Gastrocnemius medialis (tissue), 4 donors: ENCODE measurements at regions of chr14 and their contacts with region 1.

Region 1: DNA sequence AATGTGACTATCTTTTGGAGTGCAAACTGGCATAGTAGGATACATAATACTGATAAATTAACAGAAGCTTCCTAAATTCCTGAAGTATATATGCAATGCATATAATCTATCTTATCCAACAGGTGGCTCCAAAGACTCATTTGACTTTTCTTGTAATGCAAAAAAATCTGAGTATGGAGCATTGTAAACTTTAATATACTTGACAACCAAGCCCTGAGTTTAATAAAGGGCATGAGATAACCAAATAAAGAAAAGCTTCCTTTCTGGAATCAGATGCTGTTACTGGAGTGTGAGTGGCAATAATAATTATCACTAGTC is 1003.5 kb downstream of the FSCB start:
- DNase-seq: no peak
- ATAC-seq: no peak
- H3K4me3 ChIP-seq: no peak overlapping the region
- H3K27ac ChIP-seq: no peak overlapping the region
- H3K4me1 ChIP-seq: no peaks in the 10 kb centered on the region
- H3K27me3 ChIP-seq: no peaks in the 10 kb centered on the region
- CTCF ChIP-seq: no peak
- POLR2A ChIP-seq: no peak

Region 2: GRCh38 chr14:43019806-43020205 is 483.7 kb before region 1 on chr14:
- in situ Hi-C with region 1: no loop called
- intact Hi-C with region 1: loop called (anchors 10 kb)
- DNase-seq: no peak
- ATAC-seq: no peak
- H3K4me3 ChIP-seq: no peak overlapping the region
- H3K27ac ChIP-seq: no peak overlapping the region
- H3K4me1 ChIP-seq: peaks cover 0 to 6% of the 10 kb centered on the region in 2 donors
- H3K27me3 ChIP-seq: no peaks in the 10 kb centered on the region
- CTCF ChIP-seq: no peak
- POLR2A ChIP-seq: no peak